ENCODE measurements at regions of chr4 and their contacts with region 1.

Region 1: DNA sequence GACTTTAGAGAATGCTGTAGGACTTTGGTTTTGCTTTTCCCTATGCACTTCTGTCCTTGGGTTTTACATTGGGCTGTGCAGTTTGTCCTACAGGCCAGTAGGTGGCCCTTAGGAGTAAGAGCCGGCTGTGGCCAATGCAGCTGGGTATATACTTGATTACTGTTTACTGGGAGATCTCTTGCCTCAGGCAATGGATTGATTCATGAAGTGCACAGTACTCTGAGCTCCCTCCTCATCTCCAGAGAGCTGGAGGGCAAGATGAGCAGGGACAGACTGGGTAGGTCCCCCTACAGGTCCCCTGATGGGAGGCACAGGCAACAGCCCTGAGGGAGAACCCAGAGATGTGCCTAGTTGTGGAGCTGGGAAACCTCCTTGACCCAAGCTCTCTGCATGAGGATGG is 103.8 kb upstream of the QRFPR start:
- DNase-seq: peak; percentile 73
- H3K4me3 Mint-ChIP-seq: no peak overlapping the region
- H3K27ac Mint-ChIP-seq: no peak overlapping the region
- H3K4me1 Mint-ChIP-seq: peaks cover 3% of the 10 kb centered on the region
- H3K27me3 Mint-ChIP-seq: peaks cover 34% of the 10 kb centered on the region

Region 2: DNA sequence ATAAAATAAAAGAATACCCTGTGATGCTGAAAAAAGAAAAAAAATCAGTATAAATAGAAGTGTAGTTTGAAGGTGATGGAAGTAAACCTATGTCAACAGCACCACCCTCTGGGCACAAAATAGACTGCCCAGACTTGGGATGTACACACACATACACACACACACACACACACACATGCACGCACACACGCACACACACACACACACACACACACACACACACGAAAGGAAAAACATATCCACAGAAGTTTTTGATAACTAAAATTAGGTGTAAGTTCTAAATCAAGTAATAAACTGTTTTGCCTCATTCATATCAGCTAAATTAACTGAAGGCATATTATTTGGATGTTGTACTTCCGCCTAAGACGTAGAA is 171.6 kb after region 1 on chr4:
- intact Hi-C with region 1: loop called (anchors 1 kb)
- DNase-seq: peak; percentile 63
- H3K4me3 Mint-ChIP-seq: no peak overlapping the region
- H3K27ac Mint-ChIP-seq: no peak overlapping the region
- H3K4me1 Mint-ChIP-seq: no peaks in the 10 kb centered on the region
- H3K27me3 Mint-ChIP-seq: peaks cover 28% of the 10 kb centered on the region

Region 3: DNA sequence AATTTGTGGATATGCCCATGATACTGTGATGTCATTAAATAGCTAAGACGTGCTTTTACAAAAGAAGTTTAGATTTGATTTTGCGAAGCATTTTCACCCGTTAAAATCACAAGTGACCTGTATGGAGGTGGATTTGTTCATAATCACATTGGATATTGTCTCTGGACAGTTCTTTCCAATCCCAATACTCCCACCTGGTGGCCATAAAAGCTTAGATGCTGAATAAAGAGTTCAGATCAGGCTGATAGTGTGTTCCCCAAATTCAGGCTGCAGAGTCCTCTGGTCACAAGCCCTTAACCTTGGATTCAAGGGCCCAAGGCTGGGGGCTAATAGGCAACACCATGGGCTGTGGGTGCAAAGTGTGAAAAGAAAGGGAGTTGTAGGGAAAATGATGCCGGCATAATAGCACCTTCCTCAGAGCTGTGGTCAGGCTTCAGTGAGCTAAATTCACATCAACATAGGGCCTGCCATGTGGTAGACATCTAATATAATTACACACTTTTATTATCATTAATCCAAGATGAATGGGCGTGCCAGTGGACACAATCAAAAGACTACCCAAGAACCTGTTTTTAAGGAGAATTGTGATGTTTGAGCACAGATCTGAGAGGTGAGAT is 252.2 kb after region 1 on chr4:
- intact Hi-C with region 1: loop called (anchors 1 kb)
- DNase-seq: peak; percentile 77
- H3K4me3 Mint-ChIP-seq: no peak overlapping the region
- H3K27ac Mint-ChIP-seq: no peak overlapping the region
- H3K4me1 Mint-ChIP-seq: no peaks in the 10 kb centered on the region
- H3K27me3 Mint-ChIP-seq: peaks cover 34% of the 10 kb centered on the region

Measured in activated CD4-positive, alpha-beta T cell treated with anti-CD3 and anti-CD28 coated beads, Interleukin-2, amount 10 ng/mL, durations not matched to agents 24 days and 14 days (primary cell).